ENCODE measurements at regions of chr19 and their contacts with region 1.

Region 1: GRCh38 chr19:40425450-40426287 is at the start of gene SERTAD1:
- DNase-seq: peak; percentile 100
- ATAC-seq: peak; percentile 93
- H3K4me3 Mint-ChIP-seq: peak within 1 kb of the TSS; percentile 97
- H3K27ac Mint-ChIP-seq: peak within 1 kb of the TSS; percentile 96
- H3K4me1 Mint-ChIP-seq: peaks cover 12% of the 10 kb centered on the region
- H3K27me3 Mint-ChIP-seq: no peaks in the 10 kb centered on the region
- CTCF ChIP-seq: no peak
- total RNA-seq, gene SERTAD1: 15.5 to 17.2 TPM

Region 2: GRCh38 chr19:40322871-40323615 is 102.6 kb before region 1 on chr19:
- CTCF ChIA-PET with region 1: no interaction called
- POLR2A ChIA-PET with region 1: no interaction called
- intact Hi-C with region 1: no loop called
- DNase-seq: no peak
- ATAC-seq: no peak
- H3K4me3 Mint-ChIP-seq: no peak overlapping the region
- H3K27ac Mint-ChIP-seq: no peak overlapping the region
- H3K4me1 Mint-ChIP-seq: no peaks in the 10 kb centered on the region
- H3K27me3 Mint-ChIP-seq: no peaks in the 10 kb centered on the region
- CTCF ChIP-seq: no peak

Region 3: GRCh38 chr19:40413291-40413845 is 12.3 kb before region 1 on chr19 and contains the start of gene PRX:
- CTCF ChIA-PET with region 1: interaction called, 38 read pairs
- POLR2A ChIA-PET with region 1: interaction called, 4 read pairs
- intact Hi-C with region 1: no loop called
- DNase-seq: no peak
- ATAC-seq: no peak
- H3K4me3 Mint-ChIP-seq: no peak within 1 kb of the TSS
- H3K27ac Mint-ChIP-seq: no peak within 1 kb of the TSS
- H3K4me1 Mint-ChIP-seq: peaks cover 5% of the 10 kb centered on the region
- H3K27me3 Mint-ChIP-seq: no peaks in the 10 kb centered on the region
- CTCF ChIP-seq: no peak
- total RNA-seq, gene PRX: 1.2 TPM

Region 4: GRCh38 chr19:40444192-40445028 is 18.7 kb after region 1 on chr19 and contains the start of gene SERTAD3:
- CTCF ChIA-PET with region 1: interaction called, 25 read pairs
- POLR2A ChIA-PET with region 1: interaction called, 29 read pairs
- intact Hi-C with region 1: loop called (anchors 1 kb)
- DNase-seq: peak; percentile 98
- ATAC-seq: peak; percentile 75
- H3K4me3 Mint-ChIP-seq: peak within 1 kb of the TSS; percentile 92
- H3K27ac Mint-ChIP-seq: peak within 1 kb of the TSS; percentile 93
- H3K4me1 Mint-ChIP-seq: peaks cover 24% of the 10 kb centered on the region
- H3K27me3 Mint-ChIP-seq: no peaks in the 10 kb centered on the region
- CTCF ChIP-seq: peak; percentile 17
- total RNA-seq, gene SERTAD3: 8.8 to 11.2 TPM

Region 5: DNA sequence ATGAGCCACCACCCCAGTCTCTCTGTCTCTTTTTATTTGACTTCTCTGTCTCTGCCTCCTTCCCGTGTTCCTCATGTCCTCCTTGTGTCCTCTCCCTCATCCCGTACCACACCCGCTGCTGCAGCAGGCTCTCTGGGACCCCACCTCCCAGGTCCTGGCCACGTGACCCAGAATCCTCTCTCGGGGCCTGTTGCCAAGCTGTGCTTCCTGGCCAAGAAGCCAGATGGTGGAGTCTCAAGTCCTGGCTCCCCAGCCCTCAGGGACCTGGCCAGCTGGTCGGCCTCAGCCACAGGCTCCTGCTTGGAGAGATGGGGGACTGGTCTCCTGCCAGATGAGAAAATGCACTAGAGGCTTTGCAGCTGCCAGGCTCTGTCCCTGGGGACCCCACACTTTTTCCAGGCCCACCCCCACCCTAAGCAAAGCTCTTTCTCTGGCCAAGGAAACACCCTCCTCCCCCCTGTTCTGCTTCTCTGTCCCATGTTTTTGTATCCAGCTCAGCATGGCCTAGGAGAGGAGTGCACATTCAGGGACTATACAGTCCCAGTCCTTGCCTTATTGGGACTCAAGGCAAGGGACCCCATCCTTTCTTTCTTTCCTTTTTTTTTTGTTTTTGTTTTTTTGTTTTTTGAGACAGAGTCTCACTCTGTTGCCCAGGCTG is 116.7 kb after region 1 on chr19:
- CTCF ChIA-PET with region 1: no interaction called
- POLR2A ChIA-PET with region 1: no interaction called
- intact Hi-C with region 1: no loop called
- DNase-seq: no peak
- ATAC-seq: no peak
- H3K4me3 Mint-ChIP-seq: no peak overlapping the region
- H3K27ac Mint-ChIP-seq: no peak overlapping the region
- H3K4me1 Mint-ChIP-seq: no peaks in the 10 kb centered on the region
- H3K27me3 Mint-ChIP-seq: peaks cover 2% of the 10 kb centered on the region
- CTCF ChIP-seq: no peak